MCF 10A (cell line): ENCODE measurements at regions of chr15 and their contacts with region 1.

Region 1: GRCh38 chr15:81155375-81156218 is 21.5 kb downstream of the CFAP161 start:
- DNase-seq: peak; percentile 76
- H3K4me3 Mint-ChIP-seq: no peak overlapping the region
- H3K27ac Mint-ChIP-seq: no peak overlapping the region
- H3K4me1 Mint-ChIP-seq: peaks cover 32% of the 10 kb centered on the region
- H3K27me3 Mint-ChIP-seq: no peaks in the 10 kb centered on the region
- CTCF ChIP-seq: peak; percentile 70

Region 2: GRCh38 chr15:81000624-81001151 is 154.9 kb before region 1 on chr15 and contains the start of gene TLNRD1:
- CTCF ChIA-PET with region 1: no interaction called
- POLR2A ChIA-PET with region 1: no interaction called
- intact Hi-C with region 1: loop called (anchors 1 kb)
- DNase-seq: peak; percentile 91
- H3K4me3 Mint-ChIP-seq: peak within 1 kb of the TSS; percentile 82
- H3K27ac Mint-ChIP-seq: peak within 1 kb of the TSS; percentile 64
- H3K4me1 Mint-ChIP-seq: peaks cover 25% of the 10 kb centered on the region
- H3K27me3 Mint-ChIP-seq: no peaks in the 10 kb centered on the region
- CTCF ChIP-seq: no peak
- total RNA-seq, gene TLNRD1: 17.1 and 18.3 TPM in 2 replicates

Region 3: DNA sequence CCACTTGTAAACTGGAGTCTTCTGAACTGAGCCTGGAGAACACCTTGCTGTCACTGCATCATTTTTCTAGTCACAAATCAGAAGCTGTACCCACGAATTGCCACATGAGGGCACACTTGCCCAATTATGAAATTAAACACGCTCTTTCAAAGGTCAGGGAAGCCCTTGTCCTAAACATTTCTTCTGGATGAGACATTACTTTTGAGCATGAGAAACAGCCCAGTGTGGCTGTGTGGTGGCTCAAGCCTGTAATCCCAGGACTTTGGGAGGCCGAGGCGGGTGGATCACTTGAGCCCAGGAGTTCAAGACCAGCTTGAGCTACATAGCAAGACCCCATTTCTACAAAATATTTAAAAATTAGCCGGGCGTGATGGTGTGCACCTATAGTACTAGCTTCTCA is 49.0 kb before region 1 on chr15:
- CTCF ChIA-PET with region 1: interaction called, 23 read pairs
- POLR2A ChIA-PET with region 1: interaction called, 4 read pairs
- intact Hi-C with region 1: loop called (anchors 1 kb)
- DNase-seq: peak; percentile 76
- H3K4me3 Mint-ChIP-seq: no peak overlapping the region
- H3K27ac Mint-ChIP-seq: no peak overlapping the region
- H3K4me1 Mint-ChIP-seq: peaks cover 23% of the 10 kb centered on the region
- H3K27me3 Mint-ChIP-seq: no peaks in the 10 kb centered on the region
- CTCF ChIP-seq: peak; percentile 75

Region 4: GRCh38 chr15:81111510-81112470 is 43.8 kb before region 1 on chr15:
- CTCF ChIA-PET with region 1: interaction called, 23 read pairs
- POLR2A ChIA-PET with region 1: interaction called, 4 read pairs
- intact Hi-C with region 1: loop called (anchors 1 kb)
- DNase-seq: peak; percentile 60
- H3K4me3 Mint-ChIP-seq: peak overlapping the region; percentile 0
- H3K27ac Mint-ChIP-seq: no peak overlapping the region
- H3K4me1 Mint-ChIP-seq: peaks cover 28% of the 10 kb centered on the region
- H3K27me3 Mint-ChIP-seq: no peaks in the 10 kb centered on the region
- CTCF ChIP-seq: no peak

Region 5: DNA sequence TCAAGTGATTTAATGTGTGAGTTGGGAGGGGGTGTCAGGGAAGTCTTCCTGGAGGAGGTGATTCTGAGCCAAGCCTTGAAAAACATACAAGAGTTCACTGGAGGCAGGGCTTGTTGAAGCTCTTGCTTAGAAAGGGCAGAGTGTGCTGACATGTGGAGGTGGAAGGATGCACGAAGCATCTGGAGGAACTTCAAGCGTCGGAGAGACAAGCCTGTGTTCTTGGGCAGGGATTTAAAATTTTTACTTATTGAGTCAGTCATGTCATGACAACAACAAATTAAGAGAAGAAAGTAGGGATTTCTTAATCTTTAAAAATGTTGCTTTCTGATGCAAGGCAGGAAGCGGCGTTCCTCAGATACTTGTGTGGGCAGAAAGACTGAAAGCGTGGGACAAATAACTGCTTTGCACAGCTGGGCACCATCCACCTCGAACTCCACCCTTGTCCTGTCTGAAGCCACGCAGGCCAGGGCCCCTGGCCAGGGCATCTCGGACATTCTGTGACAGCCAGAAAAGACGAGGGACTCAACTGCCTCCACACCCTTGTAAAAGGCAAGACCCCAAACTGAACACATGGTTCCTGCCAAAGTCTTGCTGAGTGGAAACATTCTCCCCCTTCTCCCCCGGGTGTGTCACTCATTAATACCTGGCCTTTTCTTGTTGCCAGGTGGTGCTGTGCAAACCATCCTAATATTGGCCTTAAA is 34.1 kb after region 1 on chr15:
- CTCF ChIA-PET with region 1: no interaction called
- POLR2A ChIA-PET with region 1: no interaction called
- intact Hi-C with region 1: loop called (anchors 2 kb)
- DNase-seq: peak; percentile 75
- H3K4me3 Mint-ChIP-seq: peak overlapping the region; percentile 49
- H3K27ac Mint-ChIP-seq: peak overlapping the region; percentile 92
- H3K4me1 Mint-ChIP-seq: peaks cover 32% of the 10 kb centered on the region
- H3K27me3 Mint-ChIP-seq: no peaks in the 10 kb centered on the region
- CTCF ChIP-seq: no peak

Region 6: GRCh38 chr15:81256916-81257315 is 101.3 kb after region 1 on chr15:
- CTCF ChIA-PET with region 1: interaction called, 75 read pairs
- POLR2A ChIA-PET with region 1: interaction called, 6 read pairs
- intact Hi-C with region 1: loop called (anchors 1 kb)
- DNase-seq: peak; percentile 45
- H3K4me3 Mint-ChIP-seq: no peak overlapping the region
- H3K27ac Mint-ChIP-seq: no peak overlapping the region
- H3K4me1 Mint-ChIP-seq: peaks cover 18% of the 10 kb centered on the region
- H3K27me3 Mint-ChIP-seq: no peaks in the 10 kb centered on the region
- CTCF ChIP-seq: peak; percentile 54

Region 7: DNA sequence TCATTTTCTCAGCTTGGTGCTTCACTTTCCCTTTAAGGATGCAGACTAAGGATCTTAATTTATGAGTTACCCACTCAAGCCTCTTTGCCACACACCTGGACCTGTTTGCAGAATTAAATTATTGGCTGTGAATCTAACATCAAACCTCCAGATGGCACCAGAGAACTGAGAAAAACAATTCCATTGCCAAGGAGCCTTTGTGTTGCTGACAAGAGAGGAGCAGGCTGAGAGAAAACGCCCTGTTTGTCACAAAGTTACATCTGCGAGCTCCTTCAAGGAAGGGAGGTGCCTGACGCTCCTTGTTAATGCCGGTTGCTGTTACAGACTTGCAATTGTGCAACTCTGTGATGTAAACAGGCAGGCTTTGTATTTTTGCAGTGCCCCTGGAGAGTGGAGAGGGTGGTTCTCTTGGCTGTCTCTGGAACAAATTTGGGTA is 254.7 kb after region 1 on chr15:
- CTCF ChIA-PET with region 1: no interaction called
- POLR2A ChIA-PET with region 1: no interaction called
- intact Hi-C with region 1: no loop called
- DNase-seq: peak; percentile 82
- H3K4me3 Mint-ChIP-seq: no peak overlapping the region
- H3K27ac Mint-ChIP-seq: peak overlapping the region; percentile 31
- H3K4me1 Mint-ChIP-seq: peaks cover 13% of the 10 kb centered on the region
- H3K27me3 Mint-ChIP-seq: peaks cover 12% of the 10 kb centered on the region
- CTCF ChIP-seq: peak; percentile 48